B cell (primary cell): ENCODE measurements at regions of chr1 and their contacts with region 1.

Region 1: GRCh38 chr1:173202430-173203145 is 4.5 kb downstream of the TNFSF4 start:
- DNase-seq: peak; percentile 60
- ATAC-seq: no peak
- H3K4me3 ChIP-seq: no peak overlapping the region
- H3K4me3 Mint-ChIP-seq: no peak overlapping the region
- H3K27ac ChIP-seq: no peak overlapping the region
- H3K27ac Mint-ChIP-seq: no peak overlapping the region
- H3K4me1 ChIP-seq: peaks cover 41 to 63% of the 10 kb centered on the region in 2 donors
- H3K4me1 Mint-ChIP-seq: peaks cover 40% of the 10 kb centered on the region
- H3K27me3 ChIP-seq: no peaks in the 10 kb centered on the region
- H3K27me3 Mint-ChIP-seq: no peaks in the 10 kb centered on the region
- CTCF ChIP-seq: peak; percentile 62

Region 2: GRCh38 chr1:172753964-172754363 is 448.6 kb before region 1 on chr1:
- CTCF ChIA-PET with region 1: interaction called, 14 read pairs
- POLR2A ChIA-PET with region 1: no interaction called
- intact Hi-C with region 1: no loop called
- DNase-seq: no peak
- ATAC-seq: no peak
- H3K4me3 ChIP-seq: no peak overlapping the region
- H3K4me3 Mint-ChIP-seq: no peak overlapping the region
- H3K27ac ChIP-seq: no peak overlapping the region
- H3K27ac Mint-ChIP-seq: no peak overlapping the region
- H3K4me1 ChIP-seq: peaks cover 17 to 20% of the 10 kb centered on the region in 2 donors
- H3K4me1 Mint-ChIP-seq: peaks cover 21% of the 10 kb centered on the region
- H3K27me3 ChIP-seq: peaks cover 0 to 6% (median 5%) of the 10 kb centered on the region in 4 experiments
- H3K27me3 Mint-ChIP-seq: peaks cover 10% of the 10 kb centered on the region
- CTCF ChIP-seq: no peak

Region 3: DNA sequence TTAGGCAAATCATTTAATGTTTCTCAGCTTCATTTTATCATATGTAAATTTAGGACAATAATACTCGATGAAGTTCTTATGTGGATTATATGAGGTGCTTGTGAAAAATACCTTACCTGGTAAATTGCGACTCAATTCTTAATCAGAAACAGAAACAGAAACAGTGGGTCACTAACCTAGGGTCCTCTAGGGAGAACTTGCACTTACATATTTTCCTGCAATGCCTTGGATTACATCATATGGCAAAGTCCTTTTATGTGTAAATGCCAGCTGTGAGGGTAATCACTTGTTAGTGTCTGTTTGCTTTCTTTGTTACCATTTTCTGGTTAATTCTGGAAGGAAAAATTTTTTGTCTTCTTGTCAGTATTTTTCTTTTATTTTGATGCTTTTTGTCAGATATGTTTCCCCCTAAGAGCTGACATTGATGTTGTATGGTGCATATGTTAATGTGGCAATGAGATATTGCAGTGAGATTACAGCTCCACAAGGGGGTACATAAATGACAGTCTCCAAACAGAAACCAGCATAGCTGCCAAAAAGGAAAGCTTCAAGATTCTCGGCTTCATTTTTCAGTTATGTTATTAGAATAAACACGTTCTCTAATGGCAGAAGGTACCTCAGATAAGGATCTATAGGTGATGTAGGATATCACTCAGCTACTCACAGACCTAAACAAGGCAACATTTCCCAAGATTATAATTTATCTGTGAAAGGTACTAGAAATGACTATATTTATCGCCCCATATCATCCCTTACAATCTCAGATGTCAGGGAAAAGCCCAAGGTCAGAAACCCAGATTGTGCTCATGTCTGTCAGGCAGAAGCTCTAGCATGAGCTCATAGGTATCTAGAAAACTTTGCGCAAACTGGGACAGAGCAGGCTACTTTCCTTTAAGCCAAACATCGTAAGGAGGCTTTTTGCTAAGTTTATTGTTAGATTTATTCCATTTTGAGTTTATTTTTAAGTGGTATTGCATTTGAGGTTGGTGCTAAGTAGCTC is 423.8 kb before region 1 on chr1:
- CTCF ChIA-PET with region 1: interaction called, 61 read pairs
- POLR2A ChIA-PET with region 1: no interaction called
- intact Hi-C with region 1: no loop called
- DNase-seq: peak; percentile 33
- ATAC-seq: peak; percentile 73
- H3K4me3 ChIP-seq: no peak overlapping the region
- H3K4me3 Mint-ChIP-seq: peak overlapping the region; percentile 28
- H3K27ac ChIP-seq: no peak overlapping the region
- H3K27ac Mint-ChIP-seq: no peak overlapping the region
- H3K4me1 ChIP-seq: peaks cover 13 to 14% of the 10 kb centered on the region in 2 donors
- H3K4me1 Mint-ChIP-seq: peaks cover 26% of the 10 kb centered on the region
- H3K27me3 ChIP-seq: no peaks in the 10 kb centered on the region
- H3K27me3 Mint-ChIP-seq: no peaks in the 10 kb centered on the region
- CTCF ChIP-seq: peak; percentile 39

Region 4: DNA sequence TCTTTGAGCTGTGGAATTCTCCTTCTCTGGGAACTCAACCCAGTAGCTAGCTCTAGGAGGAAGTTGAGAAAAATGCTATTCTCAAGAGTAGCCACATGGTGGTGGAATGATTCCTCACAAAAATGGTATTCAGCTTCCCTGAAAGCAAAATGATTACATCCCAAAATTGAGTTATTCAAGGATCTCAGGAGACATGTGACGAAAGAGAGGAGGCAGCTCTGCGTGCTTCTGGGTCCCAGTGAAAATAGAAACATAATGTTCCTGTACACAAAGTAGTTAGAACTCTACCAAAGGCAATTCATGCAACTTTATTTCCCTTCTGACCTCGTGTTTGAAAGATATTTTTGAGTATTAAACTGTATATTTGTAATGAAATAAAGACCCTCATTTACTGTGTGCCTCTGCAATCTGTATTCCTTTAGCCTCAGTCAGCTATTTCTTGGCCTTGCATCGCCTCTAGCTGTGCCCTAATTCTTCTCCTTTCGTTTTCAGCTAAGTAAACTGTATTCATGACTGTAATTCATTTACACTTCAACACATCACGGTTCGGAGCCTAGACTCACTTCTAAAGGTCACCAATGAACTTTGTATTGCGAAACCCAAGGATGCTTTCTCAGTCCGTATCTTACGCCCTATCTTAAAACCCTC is 376.4 kb before region 1 on chr1:
- CTCF ChIA-PET with region 1: interaction called, 266 read pairs
- POLR2A ChIA-PET with region 1: no interaction called
- intact Hi-C with region 1: loop called (anchors 1 kb)
- DNase-seq: peak; percentile 43
- ATAC-seq: peak; percentile 62
- H3K4me3 ChIP-seq: peak overlapping the region in 1 of 5 experiments; percentile 13
- H3K4me3 Mint-ChIP-seq: no peak overlapping the region
- H3K27ac ChIP-seq: no peak overlapping the region
- H3K27ac Mint-ChIP-seq: no peak overlapping the region
- H3K4me1 ChIP-seq: peaks cover 9% of the 10 kb centered on the region in 2 donors
- H3K4me1 Mint-ChIP-seq: no peaks in the 10 kb centered on the region
- H3K27me3 ChIP-seq: no peaks in the 10 kb centered on the region
- H3K27me3 Mint-ChIP-seq: no peaks in the 10 kb centered on the region
- CTCF ChIP-seq: peak; percentile 63

Region 5: DNA sequence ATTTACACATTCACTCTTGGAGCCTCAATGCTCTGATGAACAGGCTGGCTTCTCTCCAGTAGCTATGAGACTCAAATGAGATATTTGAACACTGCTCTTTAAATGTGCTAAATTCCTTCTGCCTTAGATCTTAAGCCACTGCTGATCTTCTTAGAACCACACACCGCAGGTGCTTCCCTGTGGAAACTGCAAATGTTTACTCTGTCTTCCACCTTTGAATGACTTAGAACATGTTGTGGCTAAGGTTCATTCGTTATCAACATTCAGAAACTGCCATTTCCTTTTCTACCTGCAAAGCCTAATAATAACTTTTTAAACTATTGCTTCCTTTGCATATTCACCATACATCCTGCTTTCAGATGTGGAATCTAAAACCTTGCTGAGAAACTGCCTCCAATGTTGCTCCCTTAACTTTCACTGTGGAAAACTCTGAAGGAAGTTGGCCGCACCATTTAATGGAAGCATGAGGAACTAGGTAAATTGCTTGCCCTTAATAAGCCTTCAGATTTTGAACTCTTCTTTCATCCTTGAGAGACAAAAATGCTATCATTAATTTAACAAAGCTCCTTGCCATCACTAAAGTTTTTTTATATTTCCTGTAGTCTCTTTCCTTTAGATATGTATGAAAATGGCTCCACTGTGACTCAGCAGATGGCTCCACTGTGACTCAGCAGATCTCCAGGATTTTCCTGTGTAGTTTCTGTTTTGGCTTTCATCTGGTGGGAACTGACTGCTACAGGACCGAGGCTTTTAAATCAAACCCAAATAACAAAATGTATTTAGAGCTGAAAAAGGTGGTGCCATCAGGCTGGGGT is 295.6 kb before region 1 on chr1:
- CTCF ChIA-PET with region 1: interaction called, 3 read pairs
- POLR2A ChIA-PET with region 1: no interaction called
- intact Hi-C with region 1: loop called (anchors 10 kb)
- DNase-seq: peak; percentile 31
- ATAC-seq: peak; percentile 36
- H3K4me3 ChIP-seq: peak overlapping the region in 2 of 5 experiments; percentile 5 to 48
- H3K4me3 Mint-ChIP-seq: peak overlapping the region; percentile 55
- H3K27ac ChIP-seq: peak overlapping the region in 1 of 2 donors; percentile 54
- H3K27ac Mint-ChIP-seq: peak overlapping the region; percentile 43
- H3K4me1 ChIP-seq: peaks cover 18 to 20% of the 10 kb centered on the region in 2 donors
- H3K4me1 Mint-ChIP-seq: peaks cover 24% of the 10 kb centered on the region
- H3K27me3 ChIP-seq: no peaks in the 10 kb centered on the region
- H3K27me3 Mint-ChIP-seq: no peaks in the 10 kb centered on the region
- CTCF ChIP-seq: no peak

Region 6: GRCh38 chr1:173122958-173123852 is 79.4 kb before region 1 on chr1:
- CTCF ChIA-PET with region 1: no interaction called
- POLR2A ChIA-PET with region 1: no interaction called
- intact Hi-C with region 1: no loop called
- DNase-seq: peak; percentile 48
- ATAC-seq: peak; percentile 65
- H3K4me3 ChIP-seq: peak overlapping the region in 2 of 5 experiments; percentile 0 to 21
- H3K4me3 Mint-ChIP-seq: peak overlapping the region; percentile 46
- H3K27ac ChIP-seq: peak overlapping the region; percentile 39 to 73
- H3K27ac Mint-ChIP-seq: peak overlapping the region; percentile 73
- H3K4me1 ChIP-seq: peaks cover 21 to 27% of the 10 kb centered on the region in 2 donors
- H3K4me1 Mint-ChIP-seq: peaks cover 33% of the 10 kb centered on the region
- H3K27me3 ChIP-seq: no peaks in the 10 kb centered on the region
- H3K27me3 Mint-ChIP-seq: no peaks in the 10 kb centered on the region
- CTCF ChIP-seq: no peak

Region 7: GRCh38 chr1:173355281-173356031 is 152.9 kb after region 1 on chr1:
- CTCF ChIA-PET with region 1: no interaction called
- POLR2A ChIA-PET with region 1: no interaction called
- intact Hi-C with region 1: no loop called
- DNase-seq: peak; percentile 24
- ATAC-seq: peak; percentile 41
- H3K4me3 ChIP-seq: peak overlapping the region in 2 of 5 experiments; percentile 8 to 35
- H3K4me3 Mint-ChIP-seq: peak overlapping the region; percentile 68
- H3K27ac ChIP-seq: peak overlapping the region in 1 of 2 donors; percentile 37
- H3K27ac Mint-ChIP-seq: peak overlapping the region; percentile 50
- H3K4me1 ChIP-seq: peaks cover 18 to 23% of the 10 kb centered on the region in 2 donors
- H3K4me1 Mint-ChIP-seq: peaks cover 30% of the 10 kb centered on the region
- H3K27me3 ChIP-seq: no peaks in the 10 kb centered on the region
- H3K27me3 Mint-ChIP-seq: no peaks in the 10 kb centered on the region
- CTCF ChIP-seq: no peak

Region 8: GRCh38 chr1:173409613-173410012 is 207.0 kb after region 1 on chr1:
- CTCF ChIA-PET with region 1: interaction called, 7 read pairs
- POLR2A ChIA-PET with region 1: no interaction called
- intact Hi-C with region 1: loop called (anchors 5 kb)
- DNase-seq: peak; percentile 73
- ATAC-seq: peak; percentile 22
- H3K4me3 ChIP-seq: no peak overlapping the region
- H3K4me3 Mint-ChIP-seq: peak overlapping the region; percentile 64
- H3K27ac ChIP-seq: peak overlapping the region; percentile 89 to 97
- H3K27ac Mint-ChIP-seq: peak overlapping the region; percentile 87
- H3K4me1 ChIP-seq: peaks cover 76 to 88% of the 10 kb centered on the region in 2 donors
- H3K4me1 Mint-ChIP-seq: peaks cover 79% of the 10 kb centered on the region
- H3K27me3 ChIP-seq: no peaks in the 10 kb centered on the region
- H3K27me3 Mint-ChIP-seq: no peaks in the 10 kb centered on the region
- CTCF ChIP-seq: no peak

Region 9: DNA sequence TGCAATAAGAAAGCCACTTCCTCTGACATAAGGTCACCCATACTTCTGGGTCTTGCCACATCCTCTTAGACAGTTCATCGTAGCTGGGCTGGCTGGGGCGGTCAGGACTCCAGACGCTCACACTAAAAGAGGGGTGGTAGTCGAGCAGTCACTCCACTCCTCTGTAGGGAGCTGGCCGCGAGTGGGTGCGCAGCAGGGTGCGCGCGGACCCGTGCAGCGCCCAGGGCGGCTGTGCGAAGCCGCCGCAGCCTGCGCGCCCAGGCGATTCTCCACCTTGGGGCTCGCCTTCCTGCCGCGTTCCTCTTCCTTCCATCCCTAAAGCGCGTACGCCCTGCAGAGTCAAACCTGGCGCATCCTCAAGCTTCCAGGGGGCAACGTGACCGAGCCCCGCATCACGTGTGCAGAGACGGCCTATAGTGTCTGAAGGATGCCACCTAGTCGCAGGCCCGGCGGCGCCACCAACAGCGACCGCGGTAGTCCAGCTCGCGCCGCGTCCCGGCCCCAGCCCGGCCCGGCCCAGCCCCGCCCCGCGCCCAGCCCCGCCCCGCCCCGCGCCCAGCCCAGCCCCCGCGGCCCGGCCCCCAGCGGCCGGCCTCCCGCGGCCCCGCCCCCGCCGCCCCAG is 274.2 kb after region 1 on chr1:
- CTCF ChIA-PET with region 1: no interaction called
- POLR2A ChIA-PET with region 1: no interaction called
- intact Hi-C with region 1: loop called (anchors 5 kb)
- DNase-seq: peak; percentile 92
- ATAC-seq: peak; percentile 92
- H3K4me3 ChIP-seq: peak overlapping the region; percentile 48 to 96 (median 87)
- H3K4me3 Mint-ChIP-seq: peak overlapping the region; percentile 99
- H3K27ac ChIP-seq: peak overlapping the region; percentile 42 to 82
- H3K27ac Mint-ChIP-seq: peak overlapping the region; percentile 99
- H3K4me1 ChIP-seq: peaks cover 22 to 23% of the 10 kb centered on the region in 2 donors
- H3K4me1 Mint-ChIP-seq: peaks cover 42% of the 10 kb centered on the region
- H3K27me3 ChIP-seq: no peaks in the 10 kb centered on the region
- H3K27me3 Mint-ChIP-seq: no peaks in the 10 kb centered on the region
- CTCF ChIP-seq: no peak